Heart right ventricle (tissue), 16 donors: ENCODE measurements at regions of chr17 and their contacts with region 1.

Region 1: GRCh38 chr17:69235338-69235930 is 6.8 kb upstream of the ABCA10 start:
- DNase-seq: peak; percentile 57 to 86
- ATAC-seq: peak; percentile 85 to 93 (median 88)
- H3K4me3 ChIP-seq: no peak overlapping the region
- H3K27ac ChIP-seq: peak overlapping the region in 2 of 10 donors; percentile 10 to 12
- H3K4me1 ChIP-seq: peaks cover 0 to 5% (median 3%) of the 10 kb centered on the region in 9 donors
- H3K27me3 ChIP-seq: no peaks in the 10 kb centered on the region
- CTCF ChIP-seq: peak; percentile 59 to 85 (median 77)

Region 2: GRCh38 chr17:68771867-68772515 is 463.4 kb before region 1 on chr17:
- intact Hi-C with region 1: loop called in 9 of 10 experiments (anchors 2 to 5 kb)
- DNase-seq: peak in 1 of 2 donors; percentile 29
- ATAC-seq: peak; percentile 57 to 84 (median 76)
- H3K4me3 ChIP-seq: peak overlapping the region in 7 of 10 donors; percentile 16 to 40 (median 31)
- H3K27ac ChIP-seq: peak overlapping the region in 8 of 10 donors; percentile 2 to 83 (median 64)
- H3K4me1 ChIP-seq: peaks cover 0 to 29% (median 22%) of the 10 kb centered on the region in 9 donors
- H3K27me3 ChIP-seq: no peaks in the 10 kb centered on the region
- CTCF ChIP-seq: peak; percentile 41 to 71 (median 69)

Region 3: DNA sequence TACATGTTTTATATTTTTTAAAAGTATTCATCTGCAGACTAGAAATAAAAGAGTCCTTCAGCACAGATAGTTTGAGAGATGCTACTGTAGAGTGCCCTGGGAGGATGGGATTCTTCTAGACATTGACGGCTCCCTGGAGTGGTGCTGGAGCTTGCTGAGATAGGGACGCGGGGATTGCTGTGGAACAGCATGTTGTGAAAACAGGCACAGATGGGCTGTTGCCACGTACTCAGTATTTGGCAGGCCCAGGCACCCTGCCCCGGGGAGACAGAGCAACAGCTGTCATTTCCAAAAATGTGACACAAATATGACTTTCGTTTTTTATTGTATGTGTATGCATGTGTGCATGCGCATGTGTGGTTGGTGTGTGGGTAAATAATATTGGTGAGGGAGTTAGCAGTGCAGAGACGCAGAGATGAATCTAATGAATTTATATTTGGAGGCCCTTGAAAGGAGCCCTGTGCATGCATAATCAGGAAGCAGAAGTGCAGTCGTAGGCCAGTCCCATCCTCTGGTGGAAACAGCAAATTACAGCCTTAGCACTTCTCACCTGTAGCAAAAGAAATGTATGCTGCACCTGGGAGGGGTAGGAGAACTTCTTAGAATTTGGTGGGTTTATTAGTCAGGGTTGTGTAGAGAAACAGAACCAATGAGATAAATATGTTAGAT is 274.1 kb before region 1 on chr17:
- intact Hi-C with region 1: loop called in 1 of 10 experiments (anchors 10 kb)
- DNase-seq: peak; percentile 12 to 48
- ATAC-seq: peak; percentile 37 to 94 (median 72)
- H3K4me3 ChIP-seq: no peak overlapping the region
- H3K27ac ChIP-seq: peak overlapping the region in 4 of 10 donors; percentile 8 to 45 (median 26)
- H3K4me1 ChIP-seq: peaks cover 0 to 9% (median 0%) of the 10 kb centered on the region in 9 donors
- H3K27me3 ChIP-seq: no peaks in the 10 kb centered on the region
- CTCF ChIP-seq: no peak

Region 4: GRCh38 chr17:68972119-68972704 is 263.2 kb before region 1 on chr17:
- intact Hi-C with region 1: loop called in 4 of 10 experiments (anchors 10 kb)
- DNase-seq: no peak
- ATAC-seq: peak in 5 of 8 donors; percentile 49 to 66 (median 56)
- H3K4me3 ChIP-seq: no peak overlapping the region
- H3K27ac ChIP-seq: peak overlapping the region in 3 of 10 donors; percentile 18 to 38 (median 24)
- H3K4me1 ChIP-seq: peaks cover 0 to 6% (median 0%) of the 10 kb centered on the region in 9 donors
- H3K27me3 ChIP-seq: peaks cover 0 to 4% (median 0%) of the 10 kb centered on the region in 7 donors
- CTCF ChIP-seq: peak; percentile 21 to 70 (median 61)

Region 5: DNA sequence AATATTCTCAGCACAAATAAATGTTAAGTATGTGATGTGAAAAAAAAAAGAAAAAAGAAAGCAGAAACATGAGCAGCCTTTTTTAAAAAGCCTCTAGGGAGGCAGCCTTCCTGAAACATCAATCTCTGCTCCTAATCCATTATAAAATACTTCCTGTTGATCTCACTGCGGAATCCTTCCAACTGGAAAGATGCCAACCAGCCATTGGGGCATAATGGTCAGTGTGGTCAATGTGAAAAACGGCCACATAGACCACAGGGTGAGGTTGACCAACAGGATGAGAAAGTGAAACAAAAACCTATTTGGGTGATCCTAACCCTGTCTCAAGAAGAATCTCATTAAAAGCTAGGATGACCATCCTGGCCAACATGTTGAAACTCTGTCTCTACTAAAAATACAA is 254.1 kb before region 1 on chr17:
- intact Hi-C with region 1: loop called in 4 of 10 experiments (anchors 10 kb)
- DNase-seq: peak in 1 of 2 donors; percentile 67
- ATAC-seq: peak in 7 of 8 donors; percentile 42 to 82 (median 57)
- H3K4me3 ChIP-seq: peak overlapping the region in 1 of 10 donors; percentile 13
- H3K27ac ChIP-seq: peak overlapping the region in 8 of 10 donors; percentile 3 to 51 (median 17)
- H3K4me1 ChIP-seq: peaks cover 0 to 13% (median 0%) of the 10 kb centered on the region in 9 donors
- H3K27me3 ChIP-seq: peaks cover 0 to 4% (median 0%) of the 10 kb centered on the region in 7 donors
- CTCF ChIP-seq: no peak

Region 6: GRCh38 chr17:69300222-69300621 is 64.8 kb after region 1 on chr17:
- intact Hi-C with region 1: no loop called
- DNase-seq: no peak
- ATAC-seq: no peak
- H3K4me3 ChIP-seq: no peak overlapping the region
- H3K27ac ChIP-seq: no peak overlapping the region
- H3K4me1 ChIP-seq: no peaks in the 10 kb centered on the region
- H3K27me3 ChIP-seq: no peaks in the 10 kb centered on the region
- CTCF ChIP-seq: no peak